Activated CD4-positive, alpha-beta T cell treated with anti-CD3 and anti-CD28 coated beads for 36 hours (primary cell): ENCODE measurements at regions of chr5 and their contacts with region 1.

Region 1: GRCh38 chr5:105670586-105670985 is 2000.2 kb downstream of the EFNA5 start:
- DNase-seq: no peak
- ATAC-seq: no peak
- H3K4me3 Mint-ChIP-seq: no peak overlapping the region
- H3K27ac Mint-ChIP-seq: no peak overlapping the region
- H3K4me1 Mint-ChIP-seq: no peaks in the 10 kb centered on the region
- H3K27me3 Mint-ChIP-seq: no peaks in the 10 kb centered on the region

Region 2: GRCh38 chr5:105702323-105702722 is 31.7 kb after region 1 on chr5:
- CTCF ChIA-PET with region 1: no interaction called
- POLR2A ChIA-PET with region 1: no interaction called
- intact Hi-C with region 1: loop called in 1 of 2 experiments (anchors 1 kb)
- DNase-seq: no peak
- ATAC-seq: no peak
- H3K4me3 Mint-ChIP-seq: no peak overlapping the region
- H3K27ac Mint-ChIP-seq: no peak overlapping the region
- H3K4me1 Mint-ChIP-seq: no peaks in the 10 kb centered on the region
- H3K27me3 Mint-ChIP-seq: no peaks in the 10 kb centered on the region

Region 3: GRCh38 chr5:105730982-105731381 is 60.4 kb after region 1 on chr5:
- CTCF ChIA-PET with region 1: no interaction called
- POLR2A ChIA-PET with region 1: no interaction called
- intact Hi-C with region 1: no loop called
- DNase-seq: no peak
- ATAC-seq: no peak
- H3K4me3 Mint-ChIP-seq: no peak overlapping the region
- H3K27ac Mint-ChIP-seq: no peak overlapping the region
- H3K4me1 Mint-ChIP-seq: no peaks in the 10 kb centered on the region
- H3K27me3 Mint-ChIP-seq: no peaks in the 10 kb centered on the region